Tibial artery (tissue), 4 donors: ENCODE measurements at regions of chr14 and their contacts with region 1.

Region 1: DNA sequence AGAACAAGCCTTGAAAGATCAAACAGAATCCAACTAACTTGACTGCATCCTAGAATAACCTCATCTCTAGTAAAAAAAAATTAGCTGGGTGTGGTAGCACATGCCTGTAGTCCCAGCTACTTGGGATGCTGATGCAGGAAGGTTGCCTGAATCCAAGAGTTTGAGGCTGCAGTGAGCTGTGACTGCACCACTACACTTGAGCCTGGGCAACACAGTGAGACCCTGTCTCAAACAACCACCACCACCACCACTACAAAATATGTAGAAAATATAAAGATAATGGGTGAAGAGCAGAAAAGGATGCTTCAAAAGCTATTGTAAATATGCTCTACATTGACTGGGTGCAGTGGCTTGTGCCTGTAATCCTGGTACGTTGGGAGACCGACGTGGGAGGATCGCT is 27.3 kb downstream of the SUPT16H start:
- DNase-seq: no peak
- H3K4me3 ChIP-seq: no peak overlapping the region
- H3K27ac ChIP-seq: no peak overlapping the region
- H3K4me1 ChIP-seq: no peaks in the 10 kb centered on the region
- H3K27me3 ChIP-seq: no peaks in the 10 kb centered on the region
- CTCF ChIP-seq: no peak

Region 2: GRCh38 chr14:21395444-21395843 is 38.9 kb after region 1 on chr14:
- intact Hi-C with region 1: loop called (anchors 2 kb)
- DNase-seq: no peak
- H3K4me3 ChIP-seq: no peak overlapping the region
- H3K27ac ChIP-seq: no peak overlapping the region
- H3K4me1 ChIP-seq: no peaks in the 10 kb centered on the region
- H3K27me3 ChIP-seq: no peaks in the 10 kb centered on the region
- CTCF ChIP-seq: no peak

Region 3: GRCh38 chr14:21498553-21499526 is 142.3 kb after region 1 on chr14:
- intact Hi-C with region 1: no loop called
- DNase-seq: no peak
- H3K4me3 ChIP-seq: no peak overlapping the region
- H3K27ac ChIP-seq: no peak overlapping the region
- H3K4me1 ChIP-seq: peaks cover 0 to 6% (median 0%) of the 10 kb centered on the region in 4 donors
- H3K27me3 ChIP-seq: no peaks in the 10 kb centered on the region
- CTCF ChIP-seq: peak; percentile 41 to 53

Region 4: GRCh38 chr14:21612324-21612723 is 255.8 kb after region 1 on chr14:
- intact Hi-C with region 1: no loop called
- DNase-seq: no peak
- H3K4me3 ChIP-seq: no peak overlapping the region
- H3K27ac ChIP-seq: no peak overlapping the region
- H3K4me1 ChIP-seq: no peaks in the 10 kb centered on the region
- H3K27me3 ChIP-seq: no peaks in the 10 kb centered on the region
- CTCF ChIP-seq: no peak